GM12878 (cell line): ENCODE measurements at regions of chr2 and their contacts with region 1.

Region 1: DNA sequence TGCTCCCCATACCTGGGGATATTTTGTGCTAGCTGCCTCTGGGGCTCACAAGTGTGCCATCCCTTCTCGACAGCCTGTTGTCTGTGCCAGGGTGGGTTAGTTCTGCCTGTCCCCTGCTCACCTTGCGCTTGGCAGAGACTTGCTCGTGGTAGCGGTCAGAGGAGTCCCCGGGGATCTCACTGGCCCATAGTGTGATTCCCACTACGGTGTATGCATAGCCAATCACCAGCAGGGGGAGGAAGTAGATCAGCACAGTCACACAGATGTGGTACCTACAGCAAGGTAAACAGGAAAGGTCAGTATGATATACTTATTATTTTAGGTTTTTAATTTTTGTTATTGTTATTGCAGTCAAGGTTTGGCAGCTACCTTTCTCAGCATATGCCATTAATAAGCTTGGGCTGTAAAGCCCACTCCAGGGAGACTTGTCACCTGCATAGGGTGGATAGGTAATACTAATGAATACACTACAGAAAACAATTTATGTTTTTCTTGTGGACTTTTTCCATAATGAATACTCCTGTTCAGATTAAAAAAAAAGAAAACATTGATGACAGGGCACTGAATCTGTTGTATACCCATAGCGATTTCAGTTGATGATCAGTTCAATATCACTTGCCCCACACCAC is 95.2 kb downstream of the POLE4 start:
- DNase-seq: peak; percentile 69
- ATAC-seq: peak; percentile 78
- H3K4me3 ChIP-seq: no peak overlapping the region
- H3K27ac ChIP-seq: no peak overlapping the region
- H3K4me1 ChIP-seq: peaks cover 22% of the 10 kb centered on the region
- H3K27me3 ChIP-seq: no peaks in the 10 kb centered on the region
- CTCF ChIP-seq: peak; percentile 80 to 92 (median 88); a peak in 5 of 6 replicates
- EP300 ChIP-seq: no peak
- POLR2A ChIP-seq: no peak
- RAD21 ChIP-seq: peak; percentile 92

Region 2: DNA sequence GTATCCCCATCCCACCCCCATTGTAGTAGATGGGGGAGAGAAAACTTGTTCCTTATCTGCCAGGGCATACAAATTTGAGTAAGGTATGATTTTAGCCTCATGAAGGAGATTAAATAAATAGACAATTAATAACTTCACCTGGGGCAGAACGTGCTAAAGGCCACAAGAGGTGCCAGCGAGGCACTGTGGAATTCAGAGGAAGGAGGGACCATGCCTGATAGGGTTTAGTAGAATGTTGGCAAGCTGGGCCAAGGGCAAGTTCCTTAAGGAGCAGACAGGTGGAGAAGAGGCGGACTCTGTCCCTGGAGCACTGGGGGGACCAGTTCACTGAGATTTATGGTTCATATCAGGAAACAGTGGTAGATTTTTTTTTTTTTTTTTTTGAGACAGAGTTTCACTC is 1202.3 kb before region 1 on chr2:
- CTCF ChIA-PET with region 1: no interaction called
- POLR2A ChIA-PET with region 1: no interaction called
- RAD21 ChIA-PET with region 1: no interaction called
- SMC1A ChIA-PET with region 1: no interaction called
- in situ Hi-C with region 1: no loop called
- intact Hi-C with region 1: no loop called
- DNase-seq: no peak
- ATAC-seq: peak; percentile 71
- H3K4me3 ChIP-seq: no peak overlapping the region
- H3K27ac ChIP-seq: no peak overlapping the region
- H3K4me1 ChIP-seq: no peaks in the 10 kb centered on the region
- H3K27me3 ChIP-seq: no peaks in the 10 kb centered on the region
- CTCF ChIP-seq: peak; percentile 34 to 48 (median 38)
- EP300 ChIP-seq: no peak
- POLR2A ChIP-seq: no peak
- RAD21 ChIP-seq: peak; percentile 53

Region 3: DNA sequence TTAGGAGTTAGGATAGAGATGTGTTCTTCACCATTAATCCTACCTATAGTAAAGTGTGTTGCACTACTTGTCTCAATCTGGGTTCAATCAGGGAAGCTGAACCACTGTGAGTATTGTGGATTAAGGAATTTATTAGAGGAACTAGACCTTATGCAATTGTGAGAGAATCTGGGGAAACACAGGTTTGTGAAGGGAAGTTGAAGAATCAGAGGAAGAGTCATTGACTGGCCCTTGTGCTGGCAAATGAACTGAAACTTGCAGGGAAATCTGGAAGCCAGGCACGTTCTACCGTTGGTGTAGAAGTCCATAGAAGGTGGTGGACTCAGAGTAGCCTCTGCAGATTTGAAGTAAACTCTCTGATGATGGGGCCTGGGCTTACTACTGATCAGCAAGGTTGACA is 264.3 kb before region 1 on chr2:
- CTCF ChIA-PET with region 1: no interaction called
- POLR2A ChIA-PET with region 1: no interaction called
- RAD21 ChIA-PET with region 1: no interaction called
- SMC1A ChIA-PET with region 1: no interaction called
- in situ Hi-C with region 1: no loop called
- intact Hi-C with region 1: no loop called
- DNase-seq: no peak
- ATAC-seq: no peak
- H3K4me3 ChIP-seq: no peak overlapping the region
- H3K27ac ChIP-seq: no peak overlapping the region
- H3K4me1 ChIP-seq: no peaks in the 10 kb centered on the region
- H3K27me3 ChIP-seq: no peaks in the 10 kb centered on the region
- CTCF ChIP-seq: no peak
- EP300 ChIP-seq: no peak
- POLR2A ChIP-seq: no peak
- RAD21 ChIP-seq: no peak

Region 4: DNA sequence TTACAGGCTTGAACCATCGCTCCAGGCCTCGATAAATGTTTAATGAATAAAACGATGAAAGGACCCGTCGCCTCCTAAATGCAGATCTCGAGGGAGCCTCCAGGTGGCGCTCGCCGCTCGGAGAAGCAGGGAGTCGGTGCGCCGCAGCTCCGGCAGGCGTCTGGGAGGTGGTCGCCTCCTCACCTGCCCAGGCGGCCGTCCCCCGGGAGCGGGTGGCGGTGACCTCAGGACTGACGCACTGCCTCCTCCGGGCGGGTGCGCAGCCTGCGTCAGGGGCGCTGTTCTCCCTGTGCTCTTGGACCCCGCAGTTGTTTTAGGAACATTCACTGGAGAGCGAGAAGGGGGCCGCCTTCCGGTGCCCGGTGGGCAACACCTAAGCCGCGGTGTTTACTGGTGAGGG is 133.8 kb before region 1 on chr2:
- CTCF ChIA-PET with region 1: interaction called, 34 read pairs
- POLR2A ChIA-PET with region 1: no interaction called
- RAD21 ChIA-PET with region 1: interaction called, 7 read pairs
- SMC1A ChIA-PET with region 1: interaction called, 5 read pairs
- in situ Hi-C with region 1: no loop called
- intact Hi-C with region 1: loop called (anchors 1 kb)
- DNase-seq: no peak
- ATAC-seq: peak; percentile 77
- H3K4me3 ChIP-seq: no peak overlapping the region
- H3K27ac ChIP-seq: no peak overlapping the region
- H3K4me1 ChIP-seq: peaks cover 6% of the 10 kb centered on the region; the same call in 1 of the 2 replicates
- H3K27me3 ChIP-seq: no peaks in the 10 kb centered on the region
- CTCF ChIP-seq: peak; percentile 69 to 85 (median 84)
- EP300 ChIP-seq: no peak
- POLR2A ChIP-seq: no peak
- RAD21 ChIP-seq: peak; percentile 95

Region 5: GRCh38 chr2:75064691-75065396 is 11.2 kb after region 1 on chr2:
- CTCF ChIA-PET with region 1: interaction called, 114 read pairs
- POLR2A ChIA-PET with region 1: no interaction called
- RAD21 ChIA-PET with region 1: interaction called, 14 read pairs
- SMC1A ChIA-PET with region 1: interaction called, 92 read pairs
- in situ Hi-C with region 1: no loop called
- intact Hi-C with region 1: no loop called
- DNase-seq: no peak
- ATAC-seq: peak; percentile 91
- H3K4me3 ChIP-seq: no peak overlapping the region
- H3K27ac ChIP-seq: no peak overlapping the region
- H3K4me1 ChIP-seq: no peaks in the 10 kb centered on the region
- H3K27me3 ChIP-seq: no peaks in the 10 kb centered on the region
- CTCF ChIP-seq: peak; percentile 67 to 92 (median 89)
- EP300 ChIP-seq: no peak
- POLR2A ChIP-seq: no peak
- RAD21 ChIP-seq: peak; percentile 78

Region 6: GRCh38 chr2:75087736-75088135 is 34.1 kb after region 1 on chr2:
- CTCF ChIA-PET with region 1: no interaction called
- POLR2A ChIA-PET with region 1: no interaction called
- RAD21 ChIA-PET with region 1: no interaction called
- SMC1A ChIA-PET with region 1: no interaction called
- in situ Hi-C with region 1: no loop called
- intact Hi-C with region 1: no loop called
- DNase-seq: no peak
- ATAC-seq: no peak
- H3K4me3 ChIP-seq: no peak overlapping the region
- H3K27ac ChIP-seq: no peak overlapping the region
- H3K4me1 ChIP-seq: no peaks in the 10 kb centered on the region
- H3K27me3 ChIP-seq: no peaks in the 10 kb centered on the region
- CTCF ChIP-seq: no peak
- EP300 ChIP-seq: no peak
- POLR2A ChIP-seq: no peak
- RAD21 ChIP-seq: no peak

Region 7: GRCh38 chr2:75157430-75157829 is 103.8 kb after region 1 on chr2:
- CTCF ChIA-PET with region 1: interaction called, 3 read pairs
- POLR2A ChIA-PET with region 1: no interaction called
- RAD21 ChIA-PET with region 1: no interaction called
- SMC1A ChIA-PET with region 1: interaction called, 3 read pairs
- in situ Hi-C with region 1: no loop called
- intact Hi-C with region 1: loop called (anchors 5 kb)
- DNase-seq: no peak
- ATAC-seq: peak; percentile 45; the same call in 2 of the 3 replicates
- H3K4me3 ChIP-seq: no peak overlapping the region
- H3K27ac ChIP-seq: no peak overlapping the region
- H3K4me1 ChIP-seq: no peaks in the 10 kb centered on the region
- H3K27me3 ChIP-seq: no peaks in the 10 kb centered on the region
- CTCF ChIP-seq: peak in 2 of 3 experiments; percentile 15 to 25; a peak in 2 of 6 replicates
- EP300 ChIP-seq: no peak
- POLR2A ChIP-seq: no peak
- RAD21 ChIP-seq: peak; percentile 43; the same call in 1 of the 2 replicates

Region 8: DNA sequence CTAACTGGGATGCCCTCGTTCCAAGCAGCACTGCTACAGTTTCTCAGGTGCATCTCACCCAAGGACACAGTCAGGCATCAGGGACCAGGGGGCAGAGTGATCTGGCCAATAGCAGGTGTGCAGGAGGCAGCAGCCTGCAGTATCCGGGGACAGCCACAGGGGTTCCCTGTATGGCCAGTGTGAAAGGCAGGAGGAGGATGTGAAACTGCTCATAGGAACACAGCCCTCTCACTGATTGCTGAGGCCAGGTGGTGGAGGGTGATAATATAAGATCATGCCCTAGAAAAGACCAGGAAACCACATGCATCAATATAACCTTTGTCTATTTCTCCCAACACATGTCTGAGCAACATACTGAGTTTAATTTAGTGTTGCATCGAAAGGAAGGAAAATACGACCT is 258.4 kb after region 1 on chr2:
- CTCF ChIA-PET with region 1: interaction called, 4 read pairs
- POLR2A ChIA-PET with region 1: no interaction called
- RAD21 ChIA-PET with region 1: no interaction called
- SMC1A ChIA-PET with region 1: interaction called, 3 read pairs
- in situ Hi-C with region 1: no loop called
- intact Hi-C with region 1: loop called (anchors 2 kb)
- DNase-seq: peak; percentile 89
- ATAC-seq: peak; percentile 100
- H3K4me3 ChIP-seq: no peak overlapping the region
- H3K27ac ChIP-seq: no peak overlapping the region
- H3K4me1 ChIP-seq: peaks cover 9% of the 10 kb centered on the region
- H3K27me3 ChIP-seq: no peaks in the 10 kb centered on the region
- CTCF ChIP-seq: peak; percentile 84 to 89 (median 85)
- EP300 ChIP-seq: peak; percentile 28 to 76; a peak in 3 of 4 replicates
- POLR2A ChIP-seq: no peak
- RAD21 ChIP-seq: peak; percentile 79

Region 9: GRCh38 chr2:75608684-75609333 is 555.2 kb after region 1 on chr2:
- CTCF ChIA-PET with region 1: interaction called, 47 read pairs
- POLR2A ChIA-PET with region 1: no interaction called
- RAD21 ChIA-PET with region 1: interaction called, 8 read pairs
- SMC1A ChIA-PET with region 1: interaction called, 15 read pairs
- in situ Hi-C with region 1: loop called (anchors 5 kb)
- intact Hi-C with region 1: loop called (anchors 1 kb)
- DNase-seq: no peak
- ATAC-seq: peak; percentile 97
- H3K4me3 ChIP-seq: peak overlapping the region; percentile 49; the same call in 1 of the 2 replicates
- H3K27ac ChIP-seq: no peak overlapping the region
- H3K4me1 ChIP-seq: 0 out of 2 replicates have a peak, but pooled peaks cover 2% of the 10 kb centered on the region
- H3K27me3 ChIP-seq: no peaks in the 10 kb centered on the region
- CTCF ChIP-seq: peak; percentile 96 to 98 (median 98)
- EP300 ChIP-seq: no peak
- POLR2A ChIP-seq: no peak
- RAD21 ChIP-seq: peak; percentile 88

Region 10: DNA sequence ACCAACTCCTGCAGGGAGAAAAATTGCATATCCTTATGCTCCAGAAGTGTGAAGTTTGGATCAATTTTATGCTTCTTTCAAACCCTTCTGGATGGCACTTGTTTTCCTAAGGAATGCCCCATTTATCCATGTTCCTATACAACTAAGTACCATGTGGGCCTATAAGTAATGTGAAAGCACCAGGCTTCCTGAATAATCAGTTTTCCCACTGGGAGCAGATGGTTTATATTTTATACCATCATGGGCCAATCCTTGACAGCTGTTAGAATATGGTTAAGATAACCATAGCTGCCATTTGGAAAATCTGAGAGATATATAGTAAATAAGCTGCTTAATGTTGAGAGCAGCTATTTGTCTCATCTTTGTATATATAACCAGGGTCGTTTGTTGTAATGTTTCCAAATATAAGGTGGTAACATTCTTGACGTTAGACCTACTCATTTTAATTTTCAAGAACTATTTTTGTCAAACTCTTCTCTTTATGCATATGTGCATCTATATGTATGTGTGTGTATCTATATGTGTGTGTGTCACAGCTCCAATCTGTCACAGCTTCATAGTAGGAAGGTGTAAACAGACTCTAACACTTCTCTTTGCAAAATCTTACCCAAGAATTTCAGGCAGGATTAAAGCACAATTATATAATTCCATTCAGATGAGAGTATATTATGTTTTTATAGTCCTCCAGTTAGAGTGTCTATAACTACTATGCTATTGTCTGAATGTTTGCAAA is 1115.8 kb after region 1 on chr2:
- CTCF ChIA-PET with region 1: no interaction called
- POLR2A ChIA-PET with region 1: no interaction called
- RAD21 ChIA-PET with region 1: no interaction called
- SMC1A ChIA-PET with region 1: no interaction called
- in situ Hi-C with region 1: no loop called
- intact Hi-C with region 1: no loop called
- DNase-seq: no peak
- ATAC-seq: no peak
- H3K4me3 ChIP-seq: no peak overlapping the region
- H3K27ac ChIP-seq: no peak overlapping the region
- H3K4me1 ChIP-seq: no peaks in the 10 kb centered on the region
- H3K27me3 ChIP-seq: no peaks in the 10 kb centered on the region
- CTCF ChIP-seq: no peak
- EP300 ChIP-seq: no peak
- POLR2A ChIP-seq: no peak
- RAD21 ChIP-seq: no peak